ENCODE measurements at regions of chr2 and their contacts with region 1.

Region 1: GRCh38 chr2:20661067-20661980 is 5.6 kb upstream of the GDF7 start:
- DNase-seq: peak; percentile 61
- H3K4me3 ChIP-seq: no peak overlapping the region
- H3K27ac ChIP-seq: no peak overlapping the region
- H3K27me3 ChIP-seq: peaks cover 73% of the 10 kb centered on the region
- CTCF ChIP-seq: peak; percentile 98

Region 2: GRCh38 chr2:20635675-20636584 is 25.4 kb before region 1 on chr2:
- CTCF ChIA-PET with region 1: no interaction called
- POLR2A ChIA-PET with region 1: no interaction called
- DNase-seq: peak; percentile 53
- H3K4me3 ChIP-seq: no peak overlapping the region
- H3K27ac ChIP-seq: no peak overlapping the region
- H3K27me3 ChIP-seq: no peaks in the 10 kb centered on the region
- CTCF ChIP-seq: peak; percentile 96

Region 3: DNA sequence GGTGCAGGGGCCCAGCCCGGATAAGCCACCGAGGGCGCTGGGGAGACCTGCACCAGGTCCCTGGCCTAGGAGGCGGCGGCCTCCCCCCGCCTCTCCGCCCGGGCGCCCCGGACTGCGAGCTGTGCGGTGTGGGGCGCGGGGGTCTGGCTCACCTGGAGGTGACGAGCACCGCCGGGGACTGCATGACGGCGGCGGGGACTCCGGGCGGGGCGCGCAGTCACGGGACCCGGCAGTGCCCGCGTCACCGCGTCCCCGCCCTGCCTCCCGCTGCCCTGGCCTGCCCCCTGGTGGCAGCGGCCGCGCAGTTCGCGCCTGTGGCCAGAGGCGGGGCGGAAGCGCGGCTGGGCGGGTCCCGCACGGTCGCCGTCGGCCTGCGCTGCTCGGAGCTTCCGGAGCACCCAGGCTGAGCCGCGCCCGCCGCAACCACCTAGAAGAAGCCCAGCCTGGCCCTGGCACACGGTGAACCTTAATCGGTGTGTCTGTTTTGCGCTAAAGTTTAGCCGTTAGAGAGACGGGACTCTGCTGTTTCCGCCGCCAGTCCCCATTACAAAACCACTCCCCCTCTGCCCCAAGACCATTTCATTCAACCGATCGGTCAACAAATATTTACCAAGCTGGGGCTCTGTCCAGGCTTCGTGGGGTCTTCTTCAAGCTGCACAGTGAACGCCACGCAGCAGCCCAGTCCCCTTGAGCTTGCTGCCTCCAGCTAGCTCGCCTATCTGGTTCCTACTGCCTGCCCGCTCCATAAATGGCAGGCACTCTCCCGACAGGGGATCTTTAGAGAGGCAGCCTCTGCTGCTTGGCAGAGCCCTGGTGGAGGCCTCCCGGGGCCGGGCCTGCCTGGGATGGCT is 10.2 kb before region 1 on chr2 and contains the start of gene HS1BP3:
- CTCF ChIA-PET with region 1: interaction called, 40 read pairs
- POLR2A ChIA-PET with region 1: no interaction called
- DNase-seq: no peak
- H3K4me3 ChIP-seq: peak within 1 kb of the TSS; percentile 92
- H3K27ac ChIP-seq: peak within 1 kb of the TSS; percentile 3
- H3K27me3 ChIP-seq: peaks cover 15% of the 10 kb centered on the region
- CTCF ChIP-seq: peak; percentile 54
- polyA plus RNA-seq, gene HS1BP3: 14.2 and 16.1 TPM in 2 replicates

Region 4: DNA sequence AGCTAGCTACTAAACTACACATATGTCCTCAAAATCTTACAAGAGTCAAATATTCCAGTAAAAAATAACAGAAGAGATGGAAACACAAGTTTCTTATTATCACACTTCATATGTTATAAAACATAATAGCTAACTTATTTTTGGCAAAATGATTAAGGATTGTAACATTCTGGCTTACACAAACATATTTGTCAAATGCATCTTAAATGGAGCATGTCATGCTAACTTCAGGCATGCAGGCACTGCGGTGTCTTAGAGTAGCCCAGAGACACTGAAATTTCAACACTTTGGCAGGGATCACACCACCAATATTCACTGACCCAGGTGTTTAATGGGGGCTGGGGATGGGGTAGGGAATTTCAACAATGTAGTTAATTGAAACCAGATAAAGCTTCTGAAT is 110.0 kb after region 1 on chr2:
- CTCF ChIA-PET with region 1: interaction called, 14 read pairs
- POLR2A ChIA-PET with region 1: no interaction called
- DNase-seq: no peak
- H3K4me3 ChIP-seq: no peak overlapping the region
- H3K27ac ChIP-seq: no peak overlapping the region
- H3K27me3 ChIP-seq: no peaks in the 10 kb centered on the region
- CTCF ChIP-seq: no peak

Region 5: GRCh38 chr2:20832606-20833005 is 171.3 kb after region 1 on chr2:
- CTCF ChIA-PET with region 1: interaction called, 11 read pairs
- POLR2A ChIA-PET with region 1: no interaction called
- DNase-seq: no peak
- H3K4me3 ChIP-seq: no peak overlapping the region
- H3K27ac ChIP-seq: no peak overlapping the region
- H3K27me3 ChIP-seq: no peaks in the 10 kb centered on the region
- CTCF ChIP-seq: no peak

Region 6: DNA sequence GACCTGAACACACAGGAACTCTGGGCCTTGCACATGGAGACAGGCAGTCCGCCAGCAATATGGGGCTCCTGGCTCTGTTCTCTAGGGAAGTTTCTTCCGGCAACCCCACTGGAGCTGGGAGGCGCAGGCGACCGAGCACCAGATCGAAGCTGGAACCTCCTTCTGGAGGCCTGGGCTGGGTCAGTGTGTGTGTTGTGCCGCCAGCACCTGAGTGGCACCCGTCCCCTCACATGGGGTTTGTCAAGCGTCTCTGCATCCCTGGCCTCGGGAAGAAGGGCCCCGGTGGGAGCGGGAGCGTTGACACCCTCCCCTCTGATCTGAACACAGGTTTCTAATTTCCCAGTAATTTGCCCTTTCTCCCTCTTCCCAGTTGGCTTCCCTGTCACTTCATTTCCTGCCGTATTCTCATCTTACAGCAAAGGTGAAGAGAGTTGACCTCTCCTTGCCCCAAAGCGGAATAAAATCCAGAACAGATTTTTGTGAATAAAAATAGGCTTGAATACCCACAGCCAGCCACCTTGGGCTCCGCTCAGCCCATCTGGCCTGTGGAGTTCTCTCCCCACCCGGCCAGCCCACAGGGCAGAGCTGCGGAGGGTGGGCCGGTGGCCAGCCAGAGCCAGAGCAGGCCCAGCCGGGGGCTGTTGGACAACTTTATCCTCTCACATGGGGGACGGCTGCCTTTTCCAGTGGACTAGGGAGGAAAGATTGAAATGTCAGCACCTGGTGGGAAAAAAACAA is 296.6 kb after region 1 on chr2:
- CTCF ChIA-PET with region 1: interaction called, 302 read pairs
- POLR2A ChIA-PET with region 1: no interaction called
- DNase-seq: no peak
- H3K4me3 ChIP-seq: no peak overlapping the region
- H3K27ac ChIP-seq: no peak overlapping the region
- H3K27me3 ChIP-seq: peaks cover 5% of the 10 kb centered on the region
- CTCF ChIP-seq: no peak

Region 7: GRCh38 chr2:21026479-21027282 is 365.4 kb after region 1 on chr2:
- CTCF ChIA-PET with region 1: interaction called, 13 read pairs
- POLR2A ChIA-PET with region 1: no interaction called
- DNase-seq: no peak
- H3K4me3 ChIP-seq: no peak overlapping the region
- H3K27ac ChIP-seq: no peak overlapping the region
- H3K27me3 ChIP-seq: no peaks in the 10 kb centered on the region
- CTCF ChIP-seq: no peak